H1 (cell line): ENCODE measurements at regions of chr12 and their contacts with region 1.

Region 1: GRCh38 chr12:48542300-48542928 is 17.0 kb downstream of the OR8S1 start:
- DNase-seq: peak; percentile 9 to 66
- H3K4me3 ChIP-seq: no peak overlapping the region
- H3K27ac ChIP-seq: no peak overlapping the region
- H3K4me1 ChIP-seq: no peaks in the 10 kb centered on the region
- H3K27me3 ChIP-seq: no peaks in the 10 kb centered on the region
- CTCF ChIP-seq: peak; percentile 69 to 93 (median 89)
- EP300 ChIP-seq: no peak
- POLR2A ChIP-seq: no peak
- RAD21 ChIP-seq: peak; percentile 97

Region 2: GRCh38 chr12:48556631-48557030 is 14.2 kb after region 1 on chr12:
- CTCF ChIA-PET with region 1: interaction called, 12 read pairs
- POLR2A ChIA-PET with region 1: interaction called, 3 read pairs
- DNase-seq: no peak
- H3K4me3 ChIP-seq: no peak overlapping the region
- H3K27ac ChIP-seq: no peak overlapping the region
- H3K4me1 ChIP-seq: peaks cover 0 to 7% (median 2%) of the 10 kb centered on the region in 4 experiments; a peak in 1 of 7 replicates
- H3K27me3 ChIP-seq: no peaks in the 10 kb centered on the region
- CTCF ChIP-seq: no peak
- EP300 ChIP-seq: no peak
- POLR2A ChIP-seq: no peak
- RAD21 ChIP-seq: no peak